Esophagus muscularis mucosa (tissue), 4 donors: ENCODE measurements at regions of chr19 and their contacts with region 1.

Region 1: GRCh38 chr19:42244347-42245220 is 2.2 kb upstream of the GSK3A start:
- DNase-seq: peak; percentile 99
- H3K4me3 ChIP-seq: peak overlapping the region; percentile 79 to 92 (median 86)
- H3K27ac ChIP-seq: peak overlapping the region; percentile 95 to 100 (median 100)
- H3K4me1 ChIP-seq: peaks cover 60 to 86% (median 75%) of the 10 kb centered on the region in 4 donors
- H3K27me3 ChIP-seq: no peaks in the 10 kb centered on the region
- CTCF ChIP-seq: peak; percentile 63 to 87 (median 73)
- EP300 ChIP-seq: no peak
- POLR2A ChIP-seq: no peak

Region 2: GRCh38 chr19:42279572-42280191 is 35.1 kb after region 1 on chr19:
- intact Hi-C with region 1: loop called (anchors 2 kb)
- DNase-seq: no peak
- H3K4me3 ChIP-seq: peak overlapping the region; percentile 74 to 98 (median 85)
- H3K27ac ChIP-seq: peak overlapping the region; percentile 94 to 99 (median 98)
- H3K4me1 ChIP-seq: peaks cover 74 to 90% (median 87%) of the 10 kb centered on the region in 4 donors
- H3K27me3 ChIP-seq: no peaks in the 10 kb centered on the region
- CTCF ChIP-seq: peak; percentile 94 to 96 (median 94)
- EP300 ChIP-seq: no peak
- POLR2A ChIP-seq: no peak

Region 3: DNA sequence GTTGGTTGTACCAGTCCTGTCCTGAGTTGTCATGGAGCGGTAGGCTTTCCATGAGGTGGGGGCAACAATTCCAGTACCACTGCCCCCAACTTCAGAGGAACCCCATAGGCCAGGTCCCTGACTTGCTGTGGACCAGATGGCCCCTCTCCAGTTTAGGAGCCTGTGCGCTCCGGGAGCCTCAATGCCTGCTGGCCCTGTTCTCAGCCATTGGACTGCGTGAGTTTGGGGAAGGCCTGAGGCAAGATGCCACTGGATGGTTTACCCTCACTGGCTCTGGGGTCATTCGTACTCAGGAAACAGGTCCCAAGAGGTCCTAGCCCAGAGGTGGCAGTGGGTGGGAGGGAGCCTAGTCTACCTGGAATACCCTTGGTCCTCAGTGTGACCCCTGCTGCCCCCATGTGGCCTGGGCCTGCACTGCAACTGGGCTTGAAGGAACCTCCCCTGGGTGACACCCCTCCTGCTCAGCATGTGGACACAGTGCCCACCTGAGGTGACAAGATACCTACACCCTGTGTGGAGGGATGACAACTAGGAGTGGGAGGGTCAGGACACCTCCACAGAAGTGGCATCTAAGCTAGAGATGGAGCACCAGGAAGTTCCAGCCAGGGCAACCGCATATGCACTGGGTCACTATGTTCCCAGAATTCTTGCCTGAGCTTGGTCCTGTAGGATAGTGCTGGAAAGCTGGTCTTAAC is 51.4 kb after region 1 on chr19:
- intact Hi-C with region 1: loop called (anchors 5 kb)
- DNase-seq: peak; percentile 95
- H3K4me3 ChIP-seq: no peak overlapping the region
- H3K27ac ChIP-seq: peak overlapping the region in 1 of 4 donors; percentile 33
- H3K4me1 ChIP-seq: peaks cover 0 to 11% (median 7%) of the 10 kb centered on the region in 4 donors
- H3K27me3 ChIP-seq: no peaks in the 10 kb centered on the region
- CTCF ChIP-seq: peak; percentile 94 to 100 (median 95)
- EP300 ChIP-seq: no peak
- POLR2A ChIP-seq: no peak